A673 (cell line): ENCODE measurements at regions of chr4 and their contacts with region 1.

Region 1: GRCh38 chr4:8241895-8242696 is 27.5 kb upstream of the HTRA3 start:
- DNase-seq: peak; percentile 86
- H3K4me3 ChIP-seq: no peak overlapping the region
- H3K27ac ChIP-seq: no peak overlapping the region
- H3K4me1 ChIP-seq: no peaks in the 10 kb centered on the region
- H3K27me3 ChIP-seq: no peaks in the 10 kb centered on the region
- CTCF ChIP-seq: peak; percentile 96

Region 2: DNA sequence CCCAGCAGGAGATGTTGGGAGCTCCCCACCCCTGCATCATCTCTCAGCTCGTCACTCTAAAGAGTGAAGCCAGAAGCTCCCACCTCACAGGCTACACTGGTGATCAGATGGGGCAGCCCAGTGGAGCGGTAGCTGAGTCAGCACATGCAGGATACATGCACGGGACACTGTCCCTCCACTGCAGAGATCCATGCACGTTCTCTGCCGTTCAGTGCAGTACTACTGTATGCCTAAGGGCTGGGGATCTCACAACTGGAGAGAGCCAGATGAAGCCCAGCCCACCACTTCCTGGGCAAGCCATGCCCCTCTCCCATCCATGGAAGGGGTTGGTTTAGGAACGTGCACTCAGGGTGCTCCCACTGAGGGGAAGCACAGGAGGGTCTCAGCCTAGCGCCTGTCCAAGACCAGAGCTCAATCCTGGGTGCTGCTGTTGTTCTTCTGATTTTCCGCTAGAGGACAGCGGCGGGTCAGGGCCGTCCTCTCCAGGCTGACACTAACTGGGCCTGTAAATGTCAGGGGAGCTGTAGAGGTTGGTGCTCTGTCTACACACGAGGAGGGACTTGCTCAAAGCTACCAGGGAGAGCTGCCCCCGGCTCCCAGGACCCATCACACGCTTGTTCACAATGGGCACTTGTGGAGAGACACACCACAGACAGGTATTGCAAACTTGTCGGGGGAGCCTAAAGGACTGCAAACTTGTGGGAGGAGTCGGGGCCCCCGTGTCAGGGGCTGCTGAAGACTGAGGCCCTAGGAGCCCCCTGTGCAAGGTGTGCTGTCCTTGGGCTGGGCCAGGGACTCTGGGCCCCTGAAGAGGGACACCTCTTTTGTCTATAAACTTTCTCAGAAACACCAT is 65.3 kb before region 1 on chr4:
- CTCF ChIA-PET with region 1: interaction called, 10 read pairs
- POLR2A ChIA-PET with region 1: no interaction called
- intact Hi-C with region 1: no loop called
- DNase-seq: peak; percentile 58
- H3K4me3 ChIP-seq: no peak overlapping the region
- H3K27ac ChIP-seq: no peak overlapping the region
- H3K4me1 ChIP-seq: peaks cover 7% of the 10 kb centered on the region
- H3K27me3 ChIP-seq: no peaks in the 10 kb centered on the region
- CTCF ChIP-seq: peak; percentile 80

Region 3: DNA sequence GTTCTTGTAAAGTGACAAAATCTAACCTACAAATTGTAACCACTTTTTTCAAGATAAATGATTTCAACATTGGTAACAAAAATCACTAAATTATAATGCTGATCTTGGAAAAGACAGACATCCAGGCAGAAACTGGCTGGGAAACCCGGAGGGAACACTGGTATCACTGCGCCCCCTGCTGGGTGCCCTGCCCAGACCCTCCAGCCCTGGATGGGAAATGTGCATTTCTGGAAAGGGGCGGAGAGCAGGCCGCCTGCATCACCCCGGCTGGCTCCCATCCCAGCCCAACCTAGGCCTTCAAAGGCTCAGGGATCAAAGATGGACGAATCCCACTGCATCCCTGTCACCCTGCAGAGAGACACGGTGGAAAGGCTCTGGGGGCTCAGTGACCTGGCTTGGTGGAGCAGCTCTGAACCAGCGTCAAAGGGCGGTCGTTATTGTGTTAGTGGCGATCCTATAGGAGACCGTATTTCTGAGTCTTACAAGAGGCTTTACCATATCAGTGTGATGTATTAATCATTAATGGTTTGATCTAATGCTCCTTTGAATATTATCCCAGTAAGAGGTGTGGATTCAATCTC is 161.2 kb after region 1 on chr4:
- CTCF ChIA-PET with region 1: interaction called, 11 read pairs
- POLR2A ChIA-PET with region 1: no interaction called
- intact Hi-C with region 1: loop called (anchors 1 kb)
- DNase-seq: peak; percentile 78
- H3K4me3 ChIP-seq: no peak overlapping the region
- H3K27ac ChIP-seq: no peak overlapping the region
- H3K4me1 ChIP-seq: no peaks in the 10 kb centered on the region
- H3K27me3 ChIP-seq: no peaks in the 10 kb centered on the region
- CTCF ChIP-seq: peak; percentile 91

Region 4: GRCh38 chr4:8594097-8595038 is 352.3 kb after region 1 on chr4:
- CTCF ChIA-PET with region 1: no interaction called
- POLR2A ChIA-PET with region 1: no interaction called
- intact Hi-C with region 1: loop called (anchors 1 kb)
- DNase-seq: peak; percentile 55
- H3K4me3 ChIP-seq: no peak overlapping the region
- H3K27ac ChIP-seq: no peak overlapping the region
- H3K4me1 ChIP-seq: no peaks in the 10 kb centered on the region
- H3K27me3 ChIP-seq: peaks cover 45% of the 10 kb centered on the region
- CTCF ChIP-seq: peak; percentile 76